PC-9 (cell line): ENCODE measurements at regions of chr2 and their contacts with region 1.

Region 1: GRCh38 chr2:73111051-73112025 is 1.4 kb downstream of the RAB11FIP5 start:
- DNase-seq: peak; percentile 57 to 60
- H3K4me3 ChIP-seq: peak overlapping the region; percentile 96
- H3K27ac ChIP-seq: peak overlapping the region; percentile 57
- H3K4me1 ChIP-seq: peaks cover 20% of the 10 kb centered on the region
- H3K27me3 ChIP-seq: no peaks in the 10 kb centered on the region
- CTCF ChIP-seq: 0 out of 2 replicates have a peak, but pooled peaks have one; percentile 5

Region 2: DNA sequence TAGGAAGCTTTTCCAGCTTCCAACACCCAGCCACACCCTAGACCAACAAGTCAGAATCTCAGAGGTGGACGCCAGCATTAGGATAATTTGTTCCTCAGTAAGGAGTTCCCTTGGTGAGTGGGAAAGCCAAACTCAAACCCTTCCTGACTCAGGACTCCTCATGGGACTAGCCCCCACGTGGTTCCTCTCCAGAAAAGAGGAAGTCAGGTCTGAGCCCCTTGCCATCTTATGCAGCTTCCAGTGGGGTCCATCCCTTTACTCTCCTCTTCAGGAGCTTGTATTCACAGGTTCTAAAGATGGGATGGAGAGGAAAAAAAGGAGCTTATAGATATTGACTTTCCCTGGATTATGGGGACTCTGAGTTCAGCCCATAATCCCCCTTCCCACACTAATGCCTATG is 76.2 kb after region 1 on chr2:
- CTCF ChIA-PET with region 1: no interaction called
- POLR2A ChIA-PET with region 1: no interaction called
- intact Hi-C with region 1: no loop called
- DNase-seq: no peak
- H3K4me3 ChIP-seq: no peak overlapping the region
- H3K27ac ChIP-seq: no peak overlapping the region
- H3K4me1 ChIP-seq: no peaks in the 10 kb centered on the region
- H3K27me3 ChIP-seq: peaks cover 42% of the 10 kb centered on the region
- CTCF ChIP-seq: no peak

Region 3: DNA sequence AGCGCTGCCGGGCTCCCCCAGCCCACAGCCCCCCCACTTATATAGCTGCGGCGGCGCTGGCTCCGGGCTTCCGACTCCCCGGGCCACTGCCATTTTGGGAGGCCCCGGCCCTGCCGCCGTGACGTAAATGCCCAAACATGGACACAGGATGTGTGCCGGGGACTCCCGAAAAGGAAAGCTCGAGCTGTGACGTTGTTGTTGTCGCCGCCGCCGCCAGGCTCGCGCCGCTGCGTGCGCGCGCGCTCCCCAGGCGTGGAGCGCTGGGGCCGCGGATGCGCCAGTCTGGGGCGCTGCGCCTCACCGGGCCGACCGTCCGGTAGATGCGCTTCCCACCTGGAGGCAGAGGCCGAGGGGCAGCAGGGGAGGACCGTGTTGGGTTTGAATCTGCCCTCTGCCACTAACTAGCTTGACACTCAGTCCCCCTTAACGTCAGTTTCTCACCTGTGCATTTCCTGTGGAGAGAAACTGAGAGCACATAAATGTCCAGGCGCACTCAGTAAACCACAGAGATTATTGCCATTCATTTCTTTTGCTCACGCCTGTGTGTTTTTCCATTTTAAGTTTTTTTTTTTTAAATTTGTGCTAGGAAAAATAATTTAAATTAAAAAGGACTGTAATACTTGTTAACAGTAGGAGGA is 182.3 kb after region 1 on chr2 and contains the start of gene EGR4:
- CTCF ChIA-PET with region 1: no interaction called
- POLR2A ChIA-PET with region 1: no interaction called
- intact Hi-C with region 1: no loop called
- DNase-seq: peak; percentile 44 to 68
- H3K4me3 ChIP-seq: peak within 1 kb of the TSS; percentile 57
- H3K27ac ChIP-seq: no peak within 1 kb of the TSS
- H3K4me1 ChIP-seq: 0 out of 2 replicates have a peak, but pooled peaks cover 5% of the 10 kb centered on the region
- H3K27me3 ChIP-seq: peaks cover 38% of the 10 kb centered on the region
- CTCF ChIP-seq: no peak; the same call in 1 of the 2 replicates
- total RNA-seq, gene EGR4: not detected in 2 replicates

Region 4: DNA sequence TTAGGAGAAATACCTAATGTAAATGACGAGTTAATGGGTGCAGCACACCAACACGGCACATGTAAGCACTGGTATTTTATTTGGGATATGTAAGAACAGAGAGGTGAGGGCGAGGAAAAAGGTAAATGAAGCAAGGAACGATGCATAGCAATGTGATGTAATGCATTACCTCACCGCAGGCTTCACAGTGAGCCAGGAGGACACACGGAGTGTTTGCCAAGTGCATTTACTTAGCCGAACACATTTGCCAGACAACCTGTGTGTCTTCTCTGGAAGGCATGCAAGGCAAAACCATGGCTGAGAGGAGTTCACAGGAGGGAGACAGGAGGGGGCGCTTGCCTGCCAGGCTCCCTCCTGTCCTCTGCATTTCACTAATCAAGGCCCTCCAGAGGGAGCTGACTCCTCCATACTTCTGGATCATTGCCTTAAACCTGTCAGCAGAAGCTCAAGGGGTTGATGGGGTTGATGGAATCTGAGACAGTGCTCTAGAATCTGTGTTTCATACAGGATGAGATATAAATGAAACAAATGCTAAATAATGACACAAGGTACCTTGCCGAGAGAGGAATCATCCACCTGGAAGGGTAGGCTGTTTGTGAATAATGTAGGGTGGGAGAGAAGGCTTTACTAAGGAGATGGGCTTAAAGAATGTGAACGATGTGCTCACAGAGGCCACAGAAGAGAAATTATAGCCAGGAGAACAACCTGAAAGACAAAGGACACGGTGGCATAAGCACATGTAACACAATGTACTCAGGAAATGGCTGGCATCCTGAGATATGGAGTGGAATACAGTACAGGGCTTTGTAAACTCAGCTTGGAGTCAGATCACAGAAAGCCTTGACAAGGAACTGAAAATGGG is 634.9 kb after region 1 on chr2:
- CTCF ChIA-PET with region 1: interaction called, 15 read pairs
- POLR2A ChIA-PET with region 1: no interaction called
- intact Hi-C with region 1: no loop called
- DNase-seq: no peak
- H3K4me3 ChIP-seq: no peak overlapping the region
- H3K27ac ChIP-seq: no peak overlapping the region
- H3K4me1 ChIP-seq: no peaks in the 10 kb centered on the region
- H3K27me3 ChIP-seq: no peaks in the 10 kb centered on the region
- CTCF ChIP-seq: no peak